ENCODE measurements at regions of chr1 and their contacts with region 1.

Region 1: GRCh38 chr1:40090652-40091355 is 6.2 kb downstream of the PPT1 start:
- DNase-seq: no peak
- H3K4me3 ChIP-seq: no peak overlapping the region
- H3K27ac ChIP-seq: no peak overlapping the region
- H3K27me3 ChIP-seq: no peaks in the 10 kb centered on the region
- CTCF ChIP-seq: no peak

Region 2: GRCh38 chr1:40029608-40030007 is 61.2 kb before region 1 on chr1:
- intact Hi-C with region 1: no loop called
- DNase-seq: no peak
- H3K4me3 ChIP-seq: no peak overlapping the region
- H3K27ac ChIP-seq: no peak overlapping the region
- H3K27me3 ChIP-seq: no peaks in the 10 kb centered on the region
- CTCF ChIP-seq: no peak

Region 3: GRCh38 chr1:40122855-40123254 is 32.1 kb after region 1 on chr1:
- intact Hi-C with region 1: loop called in 1 of 2 experiments (anchors 1 kb)
- DNase-seq: no peak
- H3K4me3 ChIP-seq: no peak overlapping the region
- H3K27ac ChIP-seq: no peak overlapping the region
- H3K27me3 ChIP-seq: peaks cover 0 to 10% (median 0%) of the 10 kb centered on the region in 45 donors
- CTCF ChIP-seq: no peak

Region 4: DNA sequence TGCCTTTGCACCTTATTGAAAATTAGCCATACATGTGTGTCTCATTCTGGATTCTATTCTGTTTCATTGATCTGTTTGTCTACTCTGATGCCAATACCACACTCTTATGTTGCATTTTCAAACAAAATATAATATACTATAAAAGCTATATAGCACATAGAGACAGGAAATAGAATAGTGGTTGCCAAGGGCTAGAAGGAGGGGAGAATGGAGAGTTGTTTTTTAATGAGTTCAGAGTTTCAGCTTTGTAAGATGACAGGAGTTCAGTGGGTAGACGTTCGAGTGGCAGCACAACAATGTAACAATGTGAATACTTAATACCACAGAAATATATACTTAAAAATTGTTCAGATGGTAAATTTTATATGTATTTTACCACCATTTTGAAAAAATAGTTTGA is 87.4 kb after region 1 on chr1:
- intact Hi-C with region 1: no loop called
- DNase-seq: no peak
- H3K4me3 ChIP-seq: no peak overlapping the region
- H3K27ac ChIP-seq: no peak overlapping the region
- H3K27me3 ChIP-seq: no peaks in the 10 kb centered on the region
- CTCF ChIP-seq: no peak